Dendritic cell treated with granulocyte-macrophage colony-stimulating factor and Interleukin-4, amounts not matched to agents 40 ng/mL and 50 ng/mL, for 4 days (primary cell): ENCODE measurements at regions of chr6 and their contacts with region 1.

Region 1: DNA sequence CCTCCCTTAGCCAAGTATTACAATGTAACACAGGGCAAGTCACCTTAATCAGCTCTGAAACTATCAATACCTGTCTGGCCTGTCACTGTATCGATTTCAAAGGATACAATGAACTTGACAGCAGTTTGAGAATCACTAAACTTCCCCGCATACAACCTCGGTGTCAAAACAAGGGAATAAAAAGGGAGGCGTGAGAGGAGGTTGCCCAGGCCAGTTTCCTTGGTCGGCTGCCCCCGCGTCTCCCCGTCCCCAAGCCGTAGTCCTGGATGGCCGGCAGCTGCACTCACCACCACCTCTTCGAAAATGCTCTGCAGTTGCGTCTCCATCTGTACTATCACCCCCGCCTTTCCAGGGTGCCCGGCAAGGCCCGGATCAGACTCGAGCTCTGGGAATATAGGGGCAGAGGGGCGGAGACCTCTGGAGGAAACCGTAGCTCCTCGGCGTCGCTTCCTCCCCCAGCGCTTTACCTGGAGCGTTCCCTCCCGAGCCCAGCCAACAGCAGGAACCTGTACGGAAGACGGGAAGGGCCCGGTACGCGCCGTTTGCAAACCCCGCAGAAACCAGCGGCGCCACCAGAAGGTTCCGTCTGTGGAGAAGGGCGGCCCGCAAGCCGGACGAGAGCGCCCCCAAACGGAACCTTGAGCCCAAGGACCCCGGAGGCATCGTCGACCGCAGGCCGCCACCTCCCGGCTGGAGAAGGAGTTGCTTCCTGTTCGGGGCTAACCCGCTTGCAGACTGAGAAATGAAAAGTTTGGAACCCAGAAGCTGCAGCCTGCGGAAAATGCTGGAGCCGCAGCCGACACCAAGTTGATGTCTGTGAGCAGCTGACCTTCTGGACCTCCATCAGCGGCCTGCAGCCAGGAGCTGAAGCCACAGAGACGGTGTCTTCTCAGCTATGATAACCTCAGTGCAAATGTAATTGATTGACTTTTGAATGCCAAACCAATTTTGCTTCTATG is at the start of gene MED23:
- H3K4me3 Mint-ChIP-seq: peak within 1 kb of the TSS; percentile 100
- H3K27ac Mint-ChIP-seq: peak within 1 kb of the TSS; percentile 94
- H3K4me1 Mint-ChIP-seq: peaks cover 8% of the 10 kb centered on the region
- H3K27me3 Mint-ChIP-seq: peaks cover 2% of the 10 kb centered on the region

Region 2: DNA sequence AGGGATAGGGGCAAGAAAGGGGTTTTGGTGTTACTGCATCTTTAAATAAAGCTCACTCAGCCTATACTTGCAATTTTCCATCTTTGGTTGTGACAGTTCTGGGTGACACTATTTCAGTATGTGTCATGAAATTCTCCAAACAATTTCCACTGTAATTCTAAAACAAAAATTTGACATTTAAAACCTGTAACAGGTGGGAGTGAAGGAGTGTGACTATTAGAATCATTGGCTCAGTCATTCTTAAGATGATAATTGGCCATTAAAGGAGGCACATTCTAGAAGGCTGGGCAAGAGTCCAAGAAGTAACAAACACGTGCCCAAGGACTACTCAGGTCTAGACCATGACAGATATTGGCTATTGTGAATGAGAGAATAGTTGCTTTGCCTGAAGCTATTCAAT is 208.3 kb before region 1 on chr6:
- intact Hi-C with region 1: no loop called
- H3K4me3 Mint-ChIP-seq: no peak overlapping the region
- H3K27ac Mint-ChIP-seq: no peak overlapping the region
- H3K4me1 Mint-ChIP-seq: no peaks in the 10 kb centered on the region
- H3K27me3 Mint-ChIP-seq: no peaks in the 10 kb centered on the region

Region 3: DNA sequence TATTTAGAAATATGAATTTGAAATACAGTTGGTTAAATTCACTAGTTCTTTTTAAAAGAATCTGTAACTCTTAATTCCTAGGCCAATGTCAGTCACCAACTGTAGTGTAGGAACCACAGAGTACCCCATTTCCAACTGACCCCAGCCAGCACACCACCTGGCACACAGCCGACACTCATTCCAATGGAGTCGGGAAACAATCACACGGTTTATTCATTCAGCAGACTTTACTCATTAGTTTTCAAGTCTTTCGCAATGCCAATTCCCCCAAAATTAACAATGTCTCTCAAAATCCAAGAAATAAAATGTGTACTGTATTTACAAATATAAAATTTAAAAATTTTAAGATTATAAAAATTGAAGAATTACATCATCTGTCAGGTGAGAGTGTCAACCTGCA is 41.5 kb before region 1 on chr6:
- intact Hi-C with region 1: loop called (anchors 5 kb)
- H3K4me3 Mint-ChIP-seq: no peak overlapping the region
- H3K27ac Mint-ChIP-seq: no peak overlapping the region
- H3K4me1 Mint-ChIP-seq: no peaks in the 10 kb centered on the region
- H3K27me3 Mint-ChIP-seq: no peaks in the 10 kb centered on the region

Region 4: GRCh38 chr6:131792091-131792496 is 164.1 kb after region 1 on chr6:
- intact Hi-C with region 1: no loop called
- H3K4me3 Mint-ChIP-seq: no peak overlapping the region
- H3K27ac Mint-ChIP-seq: no peak overlapping the region
- H3K4me1 Mint-ChIP-seq: no peaks in the 10 kb centered on the region
- H3K27me3 Mint-ChIP-seq: no peaks in the 10 kb centered on the region

Region 5: DNA sequence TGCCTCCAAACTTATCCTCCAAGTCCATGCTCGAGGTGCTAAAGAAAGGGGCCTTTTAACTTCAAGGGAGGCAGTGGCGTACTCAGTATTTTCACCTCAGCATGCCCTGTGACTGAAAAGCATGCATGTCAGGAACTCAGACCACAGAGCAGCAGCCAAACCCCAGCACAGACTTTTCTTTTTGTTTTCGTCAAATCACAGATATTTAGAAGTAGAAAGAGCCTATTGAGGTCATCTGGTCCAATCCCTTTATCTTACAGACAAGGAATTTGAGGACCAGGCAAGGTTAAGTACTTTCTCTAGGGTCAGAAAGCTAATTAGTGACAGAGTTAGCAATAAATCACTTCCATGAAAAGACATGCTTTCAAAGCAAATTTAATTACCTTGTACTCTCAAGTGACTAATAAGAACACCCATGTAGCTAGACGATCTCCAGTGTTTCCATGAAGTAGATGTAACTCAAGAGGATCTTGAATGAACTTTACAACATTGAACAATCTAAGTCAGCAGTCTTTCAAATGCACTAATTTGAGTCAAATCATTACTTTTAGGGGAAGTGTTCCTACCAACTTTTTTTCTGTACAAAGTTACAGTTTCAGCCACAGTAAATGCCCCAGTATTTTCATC is 737.4 kb after region 1 on chr6:
- intact Hi-C with region 1: loop called (anchors 5 kb)
- H3K4me3 Mint-ChIP-seq: no peak overlapping the region
- H3K27ac Mint-ChIP-seq: no peak overlapping the region
- H3K4me1 Mint-ChIP-seq: peaks cover 13% of the 10 kb centered on the region
- H3K27me3 Mint-ChIP-seq: peaks cover 5% of the 10 kb centered on the region